ENCODE measurements at regions of chr5 and their contacts with region 1.

Region 1: GRCh38 chr5:119322948-119323537 is 32.8 kb upstream of the TNFAIP8 start:
- DNase-seq: no peak
- ATAC-seq: no peak
- H3K4me3 Mint-ChIP-seq: no peak overlapping the region
- H3K27ac Mint-ChIP-seq: peak overlapping the region; percentile 78
- H3K4me1 Mint-ChIP-seq: peaks cover 95% of the 10 kb centered on the region
- H3K27me3 Mint-ChIP-seq: no peaks in the 10 kb centered on the region
- CTCF ChIP-seq: no peak

Region 2: DNA sequence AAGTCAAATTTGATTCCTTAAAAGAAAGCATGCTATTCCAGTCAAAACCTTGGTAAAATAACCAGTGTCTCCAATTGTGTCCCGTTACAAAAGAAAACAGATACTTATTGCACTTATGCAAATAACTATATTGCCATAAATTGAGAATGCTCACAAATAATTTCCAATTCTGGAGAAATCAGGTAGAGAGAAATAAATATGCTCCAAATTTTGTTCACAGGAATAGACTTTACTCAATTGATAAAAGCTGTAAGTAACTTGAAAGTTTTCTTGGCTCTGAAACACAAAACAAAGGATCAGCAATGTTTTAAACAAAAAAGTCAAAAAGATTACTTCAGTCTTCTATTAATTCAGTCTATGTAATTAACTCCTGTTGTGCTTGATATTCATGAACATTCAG is 326.9 kb before region 1 on chr5:
- CTCF ChIA-PET with region 1: no interaction called
- POLR2A ChIA-PET with region 1: no interaction called
- intact Hi-C with region 1: no loop called
- DNase-seq: no peak
- ATAC-seq: no peak
- H3K4me3 Mint-ChIP-seq: no peak overlapping the region
- H3K27ac Mint-ChIP-seq: no peak overlapping the region
- H3K4me1 Mint-ChIP-seq: no peaks in the 10 kb centered on the region
- H3K27me3 Mint-ChIP-seq: no peaks in the 10 kb centered on the region
- CTCF ChIP-seq: no peak

Region 3: DNA sequence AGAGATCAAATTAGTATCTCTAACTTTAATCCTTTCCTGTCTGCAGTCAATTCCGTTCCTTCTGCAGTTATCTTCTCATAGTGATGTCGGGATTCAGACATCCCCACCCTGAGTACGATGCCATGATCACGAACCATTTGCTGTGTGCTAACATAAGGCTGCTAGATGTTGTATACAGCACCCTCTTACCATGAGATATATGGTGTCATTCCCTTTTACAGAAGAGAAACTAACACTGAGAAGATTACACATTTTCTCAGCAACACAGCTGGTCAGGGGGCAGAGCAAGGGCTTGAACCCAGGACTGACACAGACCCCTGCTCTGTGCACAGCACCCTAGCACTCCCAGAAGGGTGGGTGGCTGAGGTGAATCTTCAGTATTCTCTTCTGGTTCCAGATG is 82.4 kb after region 1 on chr5:
- CTCF ChIA-PET with region 1: no interaction called
- POLR2A ChIA-PET with region 1: interaction called, 20 read pairs
- intact Hi-C with region 1: no loop called
- DNase-seq: no peak
- ATAC-seq: no peak
- H3K4me3 Mint-ChIP-seq: no peak overlapping the region
- H3K27ac Mint-ChIP-seq: peak overlapping the region; percentile 76
- H3K4me1 Mint-ChIP-seq: peaks cover 74% of the 10 kb centered on the region
- H3K27me3 Mint-ChIP-seq: no peaks in the 10 kb centered on the region
- CTCF ChIP-seq: no peak

Region 4: DNA sequence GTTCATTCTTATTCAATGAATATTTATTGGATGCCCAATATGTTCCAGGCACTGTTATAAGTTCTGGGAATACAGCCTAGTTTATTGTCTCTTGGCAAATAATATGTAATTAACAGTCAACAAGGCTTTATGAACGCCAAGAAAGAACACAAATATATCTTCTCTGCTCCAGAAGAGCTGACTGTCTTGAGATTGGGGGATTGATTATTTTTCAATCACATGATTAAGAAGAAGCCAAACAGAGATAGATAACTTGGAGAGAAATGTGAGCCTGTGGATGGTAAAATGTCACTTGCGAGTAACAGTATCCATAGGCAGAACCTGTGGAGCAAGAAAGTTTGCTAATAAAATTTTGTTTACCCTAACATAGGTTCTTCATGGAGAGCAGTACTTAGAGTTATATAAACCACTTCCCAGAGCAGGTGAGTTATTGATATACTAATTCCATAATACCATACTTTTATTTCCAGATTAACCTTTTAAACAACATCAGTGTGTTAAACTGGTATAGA is 178.7 kb after region 1 on chr5:
- CTCF ChIA-PET with region 1: no interaction called
- POLR2A ChIA-PET with region 1: no interaction called
- intact Hi-C with region 1: no loop called
- DNase-seq: no peak
- ATAC-seq: no peak
- H3K4me3 Mint-ChIP-seq: no peak overlapping the region
- H3K27ac Mint-ChIP-seq: no peak overlapping the region
- H3K4me1 Mint-ChIP-seq: no peaks in the 10 kb centered on the region
- H3K27me3 Mint-ChIP-seq: no peaks in the 10 kb centered on the region
- CTCF ChIP-seq: no peak